Ascending aorta (tissue), 2 donors: ENCODE measurements at regions of chr6 and their contacts with region 1.

Region 1: DNA sequence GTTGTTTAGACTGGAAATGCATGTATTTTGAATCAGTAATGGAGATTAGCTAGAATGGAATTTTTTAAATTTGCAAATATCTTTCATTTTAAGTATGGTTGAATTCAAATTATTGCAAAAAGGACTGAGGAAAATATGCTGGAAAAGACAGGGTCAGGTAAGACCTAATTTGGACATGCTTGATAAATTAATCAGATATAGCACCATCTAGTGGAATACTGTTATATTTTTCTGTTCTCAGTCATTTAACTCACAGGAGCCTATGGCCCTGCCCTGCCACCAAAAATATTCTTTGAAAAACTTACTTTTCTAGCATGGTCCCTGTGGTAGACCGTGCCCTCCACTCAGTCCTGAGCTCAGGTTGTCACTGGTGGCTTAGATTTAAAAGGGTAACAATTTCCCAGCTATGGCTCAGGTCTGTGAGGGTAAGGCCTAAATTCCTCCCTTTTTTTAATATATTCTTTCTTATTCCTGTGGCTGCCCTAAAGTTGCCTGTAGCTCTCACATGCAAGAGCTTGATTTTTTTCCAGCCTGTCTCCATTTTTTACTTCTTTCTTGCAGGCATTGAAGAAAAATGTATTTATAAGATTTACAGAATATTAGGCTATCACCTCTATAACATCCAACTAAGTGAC is 25.3 kb upstream of the KIAA1586 start:
- DNase-seq: no peak
- H3K4me3 ChIP-seq: no peak overlapping the region
- H3K27ac ChIP-seq: no peak overlapping the region
- H3K4me1 ChIP-seq: no peaks in the 10 kb centered on the region
- H3K27me3 ChIP-seq: no peaks in the 10 kb centered on the region
- CTCF ChIP-seq: peak; percentile 41 to 67 (median 62)

Region 2: DNA sequence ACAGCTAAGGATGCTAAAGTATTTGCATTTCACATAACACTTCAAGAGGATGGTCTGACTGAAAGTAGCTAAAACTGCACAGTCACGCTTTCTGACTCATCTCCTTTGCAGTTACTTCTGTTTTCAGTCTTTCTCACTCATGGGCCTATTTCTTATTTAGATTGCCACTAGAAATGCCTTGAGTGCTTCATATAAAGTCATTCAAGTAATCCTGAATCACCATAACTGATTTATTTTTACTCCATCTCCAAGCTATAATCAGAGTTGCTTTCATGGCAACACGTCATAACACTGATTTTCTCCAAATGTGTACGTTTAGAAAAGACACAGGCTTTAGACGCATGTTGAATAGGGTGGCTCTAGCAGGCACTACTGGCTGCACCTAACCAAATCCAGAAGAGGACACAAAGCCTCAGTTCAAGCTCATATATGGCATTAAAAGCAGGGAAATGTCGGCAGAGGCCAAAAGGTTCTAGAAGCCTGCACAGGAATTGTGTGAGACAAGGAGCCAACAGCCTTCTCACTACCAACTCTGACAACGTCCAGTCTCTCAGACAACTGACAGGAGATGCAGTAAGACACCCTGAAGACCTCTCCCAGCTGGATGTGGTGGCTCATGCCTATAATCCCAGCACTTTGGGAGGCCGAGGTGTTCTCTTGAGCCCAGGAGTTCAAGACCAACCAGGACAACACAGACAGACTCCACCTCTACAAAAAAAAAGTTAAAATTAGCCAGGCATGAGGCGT is 130.3 kb before region 1 on chr6:
- intact Hi-C with region 1: no loop called
- DNase-seq: no peak
- H3K4me3 ChIP-seq: no peak overlapping the region
- H3K27ac ChIP-seq: peak overlapping the region in 1 of 2 donors; percentile 59
- H3K4me1 ChIP-seq: peaks cover 0 to 3% of the 10 kb centered on the region in 2 donors
- H3K27me3 ChIP-seq: no peaks in the 10 kb centered on the region
- CTCF ChIP-seq: no peak

Region 3: DNA sequence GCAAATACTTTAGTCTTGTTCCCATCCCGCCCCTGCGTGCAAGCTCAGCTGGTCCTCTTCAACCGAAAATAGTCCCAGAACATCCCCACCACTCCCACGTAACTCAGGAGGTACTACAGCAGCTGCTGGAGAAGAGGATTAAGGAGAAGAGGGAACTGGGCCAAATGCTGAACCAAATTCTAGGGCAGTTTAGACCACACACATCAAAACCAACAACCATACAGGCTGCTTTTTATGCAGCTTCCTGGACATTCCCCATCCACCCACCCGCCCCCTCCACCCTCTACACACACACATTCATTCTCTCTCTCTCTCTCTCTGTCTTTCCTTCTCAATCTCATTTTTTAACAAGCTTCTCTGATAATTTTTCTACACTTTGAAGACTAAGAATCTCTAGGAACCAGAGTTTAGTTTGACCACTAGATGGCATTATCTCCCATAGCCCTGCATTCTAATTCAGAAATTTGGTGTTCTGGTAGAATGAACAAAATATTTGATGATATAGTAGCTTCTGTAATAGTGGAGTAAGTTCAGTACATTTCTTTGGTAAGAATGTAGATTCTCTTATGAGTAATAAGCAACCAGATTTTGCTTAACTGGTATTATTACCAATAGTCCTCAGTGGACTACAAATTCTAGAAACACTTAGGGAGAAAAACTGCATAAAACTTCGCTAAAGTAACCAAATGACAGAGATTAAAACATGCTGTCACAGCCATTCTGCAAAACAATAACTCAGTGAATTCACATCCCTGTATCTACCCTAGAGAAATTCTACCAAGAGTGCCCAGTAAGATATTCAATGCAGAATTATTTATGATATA is 118.3 kb before region 1 on chr6:
- intact Hi-C with region 1: loop called (anchors 1 kb)
- DNase-seq: no peak
- H3K4me3 ChIP-seq: no peak overlapping the region
- H3K27ac ChIP-seq: no peak overlapping the region
- H3K4me1 ChIP-seq: no peaks in the 10 kb centered on the region
- H3K27me3 ChIP-seq: no peaks in the 10 kb centered on the region
- CTCF ChIP-seq: peak in 2 of 3 experiments; percentile 72 to 78

Region 4: DNA sequence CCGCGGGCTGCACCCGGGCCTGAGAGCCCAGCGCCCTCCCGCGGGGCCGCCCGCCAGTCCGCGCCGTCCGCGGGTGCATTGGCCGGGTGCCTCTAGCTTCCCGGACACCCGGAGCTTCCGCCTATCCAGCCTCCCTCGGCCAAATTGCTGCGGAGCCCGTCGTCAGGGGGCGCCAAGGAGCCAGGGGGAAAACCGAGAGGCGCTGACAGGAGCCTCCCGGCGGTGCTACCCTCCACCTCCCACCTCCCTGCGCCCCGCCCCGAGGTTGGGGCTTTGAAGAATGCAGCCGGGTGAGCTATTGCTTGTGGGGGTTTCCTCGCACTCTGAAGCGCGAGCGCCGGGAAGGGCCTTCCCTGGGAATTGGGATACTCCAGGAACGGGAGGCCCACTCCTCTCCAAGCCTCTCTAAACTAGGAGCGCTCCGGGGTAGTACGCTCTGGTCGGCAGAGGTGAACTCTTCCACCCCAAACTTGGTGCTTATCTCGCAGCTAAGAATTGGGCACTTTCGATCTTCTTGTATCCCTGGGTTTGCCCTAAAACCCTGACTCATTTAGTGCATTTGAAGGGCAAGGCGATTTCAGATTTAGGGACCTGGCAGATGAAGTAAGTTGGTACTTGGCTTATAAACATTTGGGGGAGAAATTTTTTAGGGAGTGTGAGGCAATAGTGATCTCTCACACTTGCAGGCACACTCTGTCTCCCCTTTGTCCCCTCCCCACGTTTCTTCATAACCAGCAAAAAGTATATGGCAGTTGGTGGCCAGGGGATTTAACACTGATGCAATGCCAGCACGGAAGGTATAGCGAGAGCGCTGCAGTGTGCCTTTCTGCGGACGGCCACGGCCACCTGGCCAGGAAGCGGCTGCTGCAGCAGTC is 65.8 kb before region 1 on chr6:
- intact Hi-C with region 1: loop called (anchors 5 kb)
- DNase-seq: peak; percentile 36 to 89
- H3K4me3 ChIP-seq: peak overlapping the region; percentile 61 to 75
- H3K27ac ChIP-seq: peak overlapping the region; percentile 46 to 52
- H3K4me1 ChIP-seq: peaks cover 0 to 3% of the 10 kb centered on the region in 2 donors
- H3K27me3 ChIP-seq: no peaks in the 10 kb centered on the region
- CTCF ChIP-seq: peak; percentile 61 to 80 (median 68)

Region 5: DNA sequence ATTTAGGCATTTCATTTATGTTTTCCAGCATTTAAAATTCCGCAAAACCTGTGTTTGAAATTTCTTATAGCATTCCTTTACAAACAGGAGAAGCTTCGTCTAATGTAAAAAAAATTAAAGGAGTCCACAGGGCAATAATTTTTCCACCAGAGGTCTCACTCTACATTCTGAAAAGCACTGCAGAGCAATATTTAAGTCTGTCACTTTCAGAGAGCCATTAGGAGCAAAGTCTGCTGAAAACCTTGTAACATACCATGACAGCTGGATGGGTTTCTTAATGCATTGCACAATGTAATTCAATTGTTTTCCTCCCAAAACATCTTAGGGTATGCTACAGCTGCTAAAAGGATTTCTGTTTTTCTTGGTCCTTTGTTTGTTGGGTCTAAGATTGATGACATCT is 168.9 kb after region 1 on chr6:
- intact Hi-C with region 1: no loop called
- DNase-seq: no peak
- H3K4me3 ChIP-seq: no peak overlapping the region
- H3K27ac ChIP-seq: no peak overlapping the region
- H3K4me1 ChIP-seq: no peaks in the 10 kb centered on the region
- H3K27me3 ChIP-seq: no peaks in the 10 kb centered on the region
- CTCF ChIP-seq: peak in 2 of 3 experiments; percentile 28 to 57

Region 6: GRCh38 chr6:57324538-57324937 is 303.3 kb after region 1 on chr6:
- intact Hi-C with region 1: loop called (anchors 5 kb)
- DNase-seq: no peak
- H3K4me3 ChIP-seq: no peak overlapping the region
- H3K27ac ChIP-seq: no peak overlapping the region
- H3K4me1 ChIP-seq: no peaks in the 10 kb centered on the region
- H3K27me3 ChIP-seq: no peaks in the 10 kb centered on the region
- CTCF ChIP-seq: peak; percentile 28 to 63 (median 53)